Vagina (tissue), 2 donors: ENCODE measurements at regions of chr3 and their contacts with region 1.

Region 1: DNA sequence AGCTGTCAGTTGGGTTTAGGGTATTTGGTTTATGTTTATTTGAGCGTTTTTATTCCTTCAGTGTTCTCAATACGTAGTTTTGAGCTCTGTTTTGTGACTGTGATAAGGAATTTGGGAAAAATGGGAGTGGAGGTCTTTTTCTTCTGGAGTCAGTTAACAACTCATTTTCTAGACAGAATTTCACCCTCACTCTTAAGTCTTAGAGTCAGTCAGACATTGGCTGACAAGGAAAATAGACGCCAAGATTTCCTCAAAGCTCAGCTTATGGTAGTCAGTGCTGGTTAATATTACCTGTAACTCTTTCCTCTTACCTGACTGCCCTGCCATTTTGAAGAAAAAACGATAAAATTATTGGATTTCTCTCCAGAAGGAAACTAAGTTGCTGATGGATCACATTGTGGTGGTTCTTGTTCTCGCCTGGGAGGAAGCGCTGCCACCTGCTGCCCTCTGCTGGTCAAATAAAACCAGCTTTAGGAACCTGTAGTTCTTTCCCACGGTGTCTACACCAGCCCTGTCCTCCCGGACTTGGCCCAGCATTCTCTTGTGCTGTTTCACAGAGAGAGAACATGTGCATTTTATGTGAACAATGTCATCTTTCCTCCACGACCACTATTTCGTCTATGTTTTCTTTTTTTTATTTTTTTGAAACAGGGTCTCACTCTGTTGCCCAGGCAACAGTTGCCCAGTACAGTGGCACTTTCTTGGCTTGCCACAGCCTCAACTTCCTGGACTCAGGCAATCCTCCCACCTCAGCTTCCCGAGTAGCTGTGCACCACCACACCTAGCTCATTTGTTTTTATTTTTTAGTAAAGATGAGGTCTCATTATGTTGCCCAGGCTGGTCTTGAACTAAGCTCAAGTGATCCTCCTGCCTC is 41.4 kb upstream of the UMPS start:
- DNase-seq: no peak
- H3K4me3 ChIP-seq: no peak overlapping the region
- H3K27ac ChIP-seq: no peak overlapping the region
- H3K4me1 ChIP-seq: peaks cover 6% of the 10 kb centered on the region
- H3K27me3 ChIP-seq: no peaks in the 10 kb centered on the region
- CTCF ChIP-seq: peak; percentile 52 to 82 (median 53)
- POLR2A ChIP-seq: no peak

Region 2: DNA sequence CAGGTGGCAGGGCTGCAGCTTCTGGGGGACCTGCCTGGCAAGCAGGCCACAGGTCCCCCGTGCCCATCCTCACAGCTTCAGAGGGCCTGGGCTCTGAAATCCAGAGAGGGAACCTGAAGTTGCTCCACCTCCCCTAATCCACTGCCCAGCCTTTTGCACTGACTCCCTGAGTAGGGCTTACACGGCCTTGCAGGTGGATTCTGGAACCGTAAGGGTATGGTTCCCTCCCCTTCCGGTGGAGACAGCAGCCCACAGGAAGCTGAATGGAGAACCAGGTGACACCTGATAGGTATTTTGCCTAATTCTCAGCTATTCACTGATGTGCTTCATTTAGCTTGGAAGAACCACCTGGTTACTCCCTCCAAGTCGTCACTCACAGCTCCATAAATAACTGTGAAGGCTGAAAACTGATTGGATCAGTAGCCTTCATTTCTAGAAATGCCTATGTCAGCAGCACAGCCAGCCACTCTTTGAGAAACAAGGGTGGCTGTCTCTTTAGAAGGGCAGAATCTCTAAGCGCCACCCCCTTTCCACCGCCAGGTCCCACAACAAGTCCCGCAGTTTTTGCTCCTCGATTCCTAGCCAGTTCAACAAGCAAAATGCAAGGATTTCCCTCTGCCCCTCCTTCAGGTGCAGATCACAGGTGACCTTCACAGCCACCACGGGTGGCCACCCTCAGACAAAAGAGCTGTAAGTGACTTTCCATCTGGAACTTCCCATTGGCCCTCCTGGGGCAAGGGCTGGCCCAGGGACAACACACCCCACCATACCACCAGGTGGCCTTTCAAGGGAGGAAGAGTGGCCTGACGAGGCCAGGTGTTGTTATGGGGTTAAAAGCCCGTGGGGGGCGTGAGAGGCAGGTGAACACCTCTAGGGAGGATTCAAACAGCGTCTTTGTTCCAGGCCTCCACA is 1374.2 kb before region 1 on chr3:
- intact Hi-C with region 1: no loop called
- DNase-seq: no peak
- H3K4me3 ChIP-seq: no peak overlapping the region
- H3K27ac ChIP-seq: no peak overlapping the region
- H3K4me1 ChIP-seq: no peaks in the 10 kb centered on the region
- H3K27me3 ChIP-seq: no peaks in the 10 kb centered on the region
- CTCF ChIP-seq: no peak
- POLR2A ChIP-seq: no peak

Region 3: GRCh38 chr3:124559881-124560574 is 128.8 kb before region 1 on chr3:
- intact Hi-C with region 1: loop called (anchors 10 kb)
- DNase-seq: no peak
- H3K4me3 ChIP-seq: no peak overlapping the region
- H3K27ac ChIP-seq: peak overlapping the region; percentile 34
- H3K4me1 ChIP-seq: peaks cover 23% of the 10 kb centered on the region
- H3K27me3 ChIP-seq: no peaks in the 10 kb centered on the region
- CTCF ChIP-seq: peak; percentile 52 to 61 (median 61)
- POLR2A ChIP-seq: no peak